ENCODE measurements at regions of chr22 and their contacts with region 1.

Region 1: DNA sequence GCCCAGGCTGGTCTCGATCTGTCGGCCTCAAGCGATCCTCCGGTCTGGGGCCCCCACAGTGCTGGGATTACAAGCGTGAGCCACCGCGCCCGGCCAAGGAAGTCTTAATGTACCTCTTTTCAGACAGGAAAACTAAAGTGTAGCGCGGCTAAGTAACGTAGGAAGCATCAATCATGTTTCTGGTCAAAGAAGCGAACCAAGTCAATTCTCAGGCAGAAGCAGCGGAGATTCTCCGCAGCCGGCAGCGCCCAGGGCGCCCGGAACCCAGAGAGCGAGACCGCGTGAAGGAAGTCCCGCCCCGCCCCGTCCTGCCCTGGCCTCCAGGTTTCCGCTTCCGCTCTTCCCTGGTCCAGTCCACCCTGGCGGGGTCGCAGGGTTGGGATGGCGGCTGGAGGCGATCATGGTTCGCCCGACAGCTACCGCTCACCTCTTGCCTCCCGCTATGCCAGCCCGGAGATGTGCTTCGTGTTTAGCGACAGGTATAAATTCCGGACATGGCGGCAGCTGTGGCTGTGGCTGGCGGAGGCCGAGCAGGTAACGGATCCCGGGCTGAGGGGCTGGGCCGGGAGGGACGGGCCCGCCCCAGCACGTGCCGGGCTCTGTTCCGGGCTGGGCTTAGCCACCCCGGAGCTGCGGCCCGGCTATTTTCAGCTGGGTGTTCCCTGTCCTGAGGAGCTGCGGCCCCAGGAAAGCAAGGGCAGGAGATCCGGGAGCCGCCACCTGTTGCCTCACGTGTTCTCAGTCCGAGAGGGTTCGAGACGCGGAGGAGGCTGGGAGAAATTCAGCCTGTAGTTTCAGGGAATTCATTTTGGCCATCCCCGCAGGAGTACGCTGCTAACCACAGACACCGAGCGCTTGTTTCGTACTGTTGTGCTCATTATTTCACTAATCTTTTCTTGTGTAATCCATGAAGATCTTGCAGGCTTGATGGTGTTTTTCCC is at the start of gene ADSL:
- DNase-seq: peak; percentile 77 to 84
- H3K4me3 ChIP-seq: peak within 1 kb of the TSS; percentile 79
- H3K27ac ChIP-seq: peak within 1 kb of the TSS; percentile 87
- H3K4me1 ChIP-seq: peaks cover 14% of the 10 kb centered on the region
- H3K27me3 ChIP-seq: no peaks in the 10 kb centered on the region
- CTCF ChIP-seq: no peak
- total RNA-seq, gene ADSL: 56.2 and 66.2 TPM in 2 replicates

Region 2: GRCh38 chr22:39496131-39496838 is 850.2 kb before region 1 on chr22:
- CTCF ChIA-PET with region 1: no interaction called
- POLR2A ChIA-PET with region 1: interaction called, 5 read pairs
- intact Hi-C with region 1: loop called (anchors 5 kb)
- DNase-seq: peak; percentile 39 to 59
- H3K4me3 ChIP-seq: no peak overlapping the region
- H3K27ac ChIP-seq: no peak overlapping the region
- H3K4me1 ChIP-seq: peaks cover 9% of the 10 kb centered on the region
- H3K27me3 ChIP-seq: no peaks in the 10 kb centered on the region
- CTCF ChIP-seq: peak; percentile 87

Region 3: GRCh38 chr22:40044102-40044869 is 302.2 kb before region 1 on chr22:
- CTCF ChIA-PET with region 1: no interaction called
- POLR2A ChIA-PET with region 1: no interaction called
- intact Hi-C with region 1: loop called (anchors 2 kb)
- DNase-seq: peak; percentile 99
- H3K4me3 ChIP-seq: peak overlapping the region; percentile 65
- H3K27ac ChIP-seq: peak overlapping the region; percentile 46
- H3K4me1 ChIP-seq: peaks cover 29% of the 10 kb centered on the region
- H3K27me3 ChIP-seq: no peaks in the 10 kb centered on the region; the same call in 1 of the 2 replicates
- CTCF ChIP-seq: no peak

Region 4: DNA sequence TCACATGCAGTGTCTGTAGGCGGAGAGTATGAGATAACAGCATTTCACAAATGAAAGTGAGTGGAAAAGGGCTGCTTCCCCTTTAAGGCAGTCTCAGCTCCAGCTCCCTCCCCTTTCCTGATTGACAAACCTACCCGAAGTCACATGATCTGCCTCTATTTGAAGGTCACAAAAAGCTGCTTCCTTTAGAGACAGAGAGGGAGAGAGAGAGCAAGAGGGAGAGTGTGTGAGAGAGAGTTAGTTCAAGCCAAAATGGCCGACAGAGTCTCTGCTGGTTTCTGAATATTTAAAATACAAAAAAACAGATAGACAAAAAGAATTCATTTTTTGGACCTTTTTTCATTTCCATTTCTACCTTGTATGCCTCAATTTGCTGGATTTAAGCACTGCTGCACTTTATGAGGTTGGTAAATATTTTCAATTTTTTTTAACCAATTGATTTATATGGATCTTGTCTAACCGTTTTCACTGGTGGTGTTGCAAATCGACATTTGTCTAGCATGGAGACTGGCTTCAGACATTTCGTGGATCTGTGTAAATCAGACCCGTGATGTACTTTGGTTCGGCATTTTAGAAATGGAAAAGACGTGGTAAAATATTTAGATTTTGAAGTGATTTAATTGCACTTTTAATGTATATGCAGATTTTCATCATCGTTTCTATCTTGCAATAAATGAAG is 168.6 kb before region 1 on chr22 and contains the start of gene TNRC6B:
- CTCF ChIA-PET with region 1: no interaction called
- POLR2A ChIA-PET with region 1: interaction called, 12 read pairs
- intact Hi-C with region 1: no loop called
- DNase-seq: peak; percentile 64 to 96
- H3K4me3 ChIP-seq: peak within 1 kb of the TSS; percentile 91
- H3K27ac ChIP-seq: peak within 1 kb of the TSS; percentile 69
- H3K4me1 ChIP-seq: peaks cover 32% of the 10 kb centered on the region
- H3K27me3 ChIP-seq: no peaks in the 10 kb centered on the region
- CTCF ChIP-seq: no peak
- total RNA-seq, gene TNRC6B: 57.8 and 62.7 TPM in 2 replicates

Region 5: GRCh38 chr22:40396882-40397281 is 50.4 kb after region 1 on chr22:
- CTCF ChIA-PET with region 1: no interaction called
- POLR2A ChIA-PET with region 1: interaction called, 10 read pairs
- intact Hi-C with region 1: no loop called
- DNase-seq: peak; percentile 89 to 99
- H3K4me3 ChIP-seq: no peak overlapping the region; the same call in 1 of the 2 replicates
- H3K27ac ChIP-seq: peak overlapping the region; percentile 88
- H3K4me1 ChIP-seq: peaks cover 41% of the 10 kb centered on the region
- H3K27me3 ChIP-seq: no peaks in the 10 kb centered on the region
- CTCF ChIP-seq: no peak

Region 6: GRCh38 chr22:40651563-40652501 is 305.4 kb after region 1 on chr22:
- CTCF ChIA-PET with region 1: no interaction called
- POLR2A ChIA-PET with region 1: no interaction called
- intact Hi-C with region 1: no loop called
- DNase-seq: peak; percentile 95 to 99
- H3K4me3 ChIP-seq: peak overlapping the region; percentile 68
- H3K27ac ChIP-seq: peak overlapping the region; percentile 98
- H3K4me1 ChIP-seq: peaks cover 15% of the 10 kb centered on the region
- H3K27me3 ChIP-seq: no peaks in the 10 kb centered on the region
- CTCF ChIP-seq: no peak